ENCODE measurements at regions of chr15 and their contacts with region 1.

Region 1: DNA sequence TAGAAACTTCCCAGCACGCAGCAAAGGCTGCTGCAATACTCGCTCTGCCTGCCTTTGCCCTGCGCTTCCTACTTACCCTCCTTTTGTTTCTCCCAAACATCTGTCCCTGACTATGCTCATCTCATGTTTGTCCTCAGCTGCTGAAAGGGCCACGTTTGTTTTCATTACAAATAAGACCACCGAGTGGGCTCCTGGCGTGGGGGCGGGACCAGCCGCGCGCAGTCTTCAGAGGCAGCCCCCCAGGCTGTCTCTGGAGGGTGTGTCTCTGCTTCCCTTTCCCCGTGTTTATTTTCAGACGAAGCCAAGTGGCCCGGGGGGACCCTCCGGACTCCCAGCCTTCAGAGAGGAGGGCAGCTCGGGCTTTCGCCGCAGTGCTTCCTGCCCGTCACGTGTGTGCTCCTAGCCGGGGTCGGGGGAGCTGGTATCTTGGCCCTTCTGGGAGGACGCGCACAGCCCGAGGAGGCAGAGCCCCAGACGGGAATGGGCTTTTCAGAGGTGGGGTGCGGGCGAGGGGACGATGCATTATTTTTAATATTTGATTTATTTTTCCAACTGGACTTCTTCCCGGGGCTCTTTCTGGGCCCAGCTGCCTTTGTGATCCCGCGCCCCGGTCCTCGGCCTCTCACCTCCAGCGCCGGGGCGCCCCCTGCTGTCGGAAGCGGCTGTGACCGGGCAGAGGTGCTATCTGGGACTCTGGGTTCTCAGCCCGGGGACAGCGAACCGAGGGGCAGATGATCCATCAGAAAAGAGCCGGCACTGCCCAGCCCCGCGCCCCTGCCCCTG is 70.0 kb upstream of the CGNL1 start:
- DNase-seq: peak; percentile 87
- ATAC-seq: peak; percentile 73
- H3K4me3 ChIP-seq: peak overlapping the region; percentile 48 to 97 (median 66)
- H3K4me3 Mint-ChIP-seq: peak overlapping the region; percentile 85
- H3K27ac ChIP-seq: peak overlapping the region; percentile 57 to 87
- H3K27ac Mint-ChIP-seq: peak overlapping the region; percentile 87
- H3K4me1 ChIP-seq: peaks cover 36 to 44% of the 10 kb centered on the region in 2 donors
- H3K4me1 Mint-ChIP-seq: peaks cover 57% of the 10 kb centered on the region
- H3K27me3 ChIP-seq: no peaks in the 10 kb centered on the region
- H3K27me3 Mint-ChIP-seq: no peaks in the 10 kb centered on the region
- CTCF ChIP-seq: peak; percentile 95

Region 2: GRCh38 chr15:56365075-56365711 is 941.2 kb before region 1 on chr15 and contains the start of gene TEX9:
- CTCF ChIA-PET with region 1: no interaction called
- POLR2A ChIA-PET with region 1: no interaction called
- intact Hi-C with region 1: loop called (anchors 5 kb)
- DNase-seq: peak; percentile 86
- ATAC-seq: peak; percentile 88
- H3K4me3 ChIP-seq: peak within 1 kb of the TSS; percentile 60 to 71 (median 68)
- H3K4me3 Mint-ChIP-seq: peak within 1 kb of the TSS; percentile 95
- H3K27ac ChIP-seq: peak within 1 kb of the TSS; percentile 1 to 71
- H3K27ac Mint-ChIP-seq: peak within 1 kb of the TSS; percentile 90
- H3K4me1 ChIP-seq: peaks cover 15% of the 10 kb centered on the region in 2 donors
- H3K4me1 Mint-ChIP-seq: peaks cover 36% of the 10 kb centered on the region
- H3K27me3 ChIP-seq: peaks cover 0 to 8% (median 5%) of the 10 kb centered on the region in 4 experiments
- H3K27me3 Mint-ChIP-seq: no peaks in the 10 kb centered on the region
- CTCF ChIP-seq: no peak
- total RNA-seq, gene TEX9: 41.8 and 43.1 TPM in 2 replicates

Region 3: GRCh38 chr15:56683908-56684307 is 622.4 kb before region 1 on chr15:
- CTCF ChIA-PET with region 1: no interaction called
- POLR2A ChIA-PET with region 1: interaction called, 10 read pairs
- intact Hi-C with region 1: no loop called
- DNase-seq: no peak
- ATAC-seq: no peak
- H3K4me3 ChIP-seq: no peak overlapping the region
- H3K4me3 Mint-ChIP-seq: no peak overlapping the region
- H3K27ac ChIP-seq: no peak overlapping the region
- H3K27ac Mint-ChIP-seq: no peak overlapping the region
- H3K4me1 ChIP-seq: no peaks in the 10 kb centered on the region
- H3K4me1 Mint-ChIP-seq: peaks cover 2% of the 10 kb centered on the region
- H3K27me3 ChIP-seq: no peaks in the 10 kb centered on the region
- H3K27me3 Mint-ChIP-seq: no peaks in the 10 kb centered on the region
- CTCF ChIP-seq: no peak

Region 4: GRCh38 chr15:57017024-57017423 is 289.3 kb before region 1 on chr15:
- CTCF ChIA-PET with region 1: interaction called, 3 read pairs
- POLR2A ChIA-PET with region 1: no interaction called
- intact Hi-C with region 1: loop called (anchors 2 kb)
- DNase-seq: peak; percentile 13
- ATAC-seq: peak; percentile 33
- H3K4me3 ChIP-seq: no peak overlapping the region
- H3K4me3 Mint-ChIP-seq: no peak overlapping the region
- H3K27ac ChIP-seq: no peak overlapping the region
- H3K27ac Mint-ChIP-seq: no peak overlapping the region
- H3K4me1 ChIP-seq: no peaks in the 10 kb centered on the region
- H3K4me1 Mint-ChIP-seq: peaks cover 16% of the 10 kb centered on the region
- H3K27me3 ChIP-seq: no peaks in the 10 kb centered on the region
- H3K27me3 Mint-ChIP-seq: no peaks in the 10 kb centered on the region
- CTCF ChIP-seq: no peak

Region 5: DNA sequence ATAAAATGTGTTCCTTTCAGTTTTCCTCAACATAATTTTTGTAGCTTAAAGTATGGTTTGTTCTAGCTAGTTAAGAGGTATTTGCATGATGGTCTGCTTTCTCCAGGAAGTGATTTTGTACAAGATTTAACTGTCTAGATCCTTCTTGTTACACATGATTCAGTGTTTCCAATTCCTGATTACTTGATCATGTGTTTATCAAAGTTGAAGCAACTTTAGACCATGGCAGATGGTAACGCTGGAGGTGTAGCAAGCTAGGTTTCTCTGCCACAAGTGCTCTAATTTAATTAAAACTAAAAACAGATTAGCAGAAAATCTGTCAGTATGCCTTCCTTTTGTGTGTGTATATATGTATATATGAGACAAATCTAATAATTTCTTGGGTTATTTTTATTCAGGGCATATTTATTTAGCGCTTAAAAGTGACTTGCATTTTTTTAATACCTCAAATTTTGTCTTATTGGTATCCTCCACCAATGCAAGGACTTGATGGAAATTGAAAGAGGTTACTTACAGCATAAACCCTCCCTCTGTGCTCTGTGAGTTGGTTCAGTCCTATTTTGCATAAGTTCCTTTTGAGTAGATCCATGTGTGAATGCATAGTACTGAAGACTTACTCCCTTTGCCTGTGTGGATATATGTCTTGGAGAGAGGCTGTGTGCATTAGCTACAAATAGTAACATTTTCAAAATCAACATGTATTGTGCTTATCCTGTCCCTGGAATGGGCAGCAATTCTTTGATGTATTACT is 87.4 kb before region 1 on chr15:
- CTCF ChIA-PET with region 1: interaction called, 26 read pairs
- POLR2A ChIA-PET with region 1: no interaction called
- intact Hi-C with region 1: loop called (anchors 2 kb)
- DNase-seq: peak; percentile 48
- ATAC-seq: no peak
- H3K4me3 ChIP-seq: peak overlapping the region in 1 of 5 experiments; percentile 20
- H3K4me3 Mint-ChIP-seq: peak overlapping the region; percentile 77
- H3K27ac ChIP-seq: no peak overlapping the region
- H3K27ac Mint-ChIP-seq: no peak overlapping the region
- H3K4me1 ChIP-seq: peaks cover 12 to 18% of the 10 kb centered on the region in 2 donors
- H3K4me1 Mint-ChIP-seq: peaks cover 40% of the 10 kb centered on the region
- H3K27me3 ChIP-seq: no peaks in the 10 kb centered on the region
- H3K27me3 Mint-ChIP-seq: no peaks in the 10 kb centered on the region
- CTCF ChIP-seq: no peak

Region 6: DNA sequence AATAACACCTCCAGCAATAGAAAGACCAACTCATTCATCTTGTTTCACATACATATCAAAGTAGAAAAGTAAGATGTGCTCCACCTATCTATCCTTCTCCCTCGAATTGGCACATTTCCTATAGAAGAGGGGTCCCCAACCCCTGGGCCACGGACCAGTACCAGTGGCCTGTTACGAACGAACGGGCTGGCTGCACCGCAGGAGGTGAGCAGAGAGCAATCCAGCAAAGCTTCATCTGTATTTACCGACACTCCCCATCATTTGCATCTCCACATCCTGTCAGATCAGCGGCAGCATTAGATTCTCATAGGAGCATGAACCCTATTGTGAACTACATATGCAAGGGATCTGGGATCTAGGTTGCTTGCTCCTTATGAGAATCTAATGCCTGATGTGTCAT is 25.0 kb before region 1 on chr15:
- CTCF ChIA-PET with region 1: interaction called, 45 read pairs
- POLR2A ChIA-PET with region 1: interaction called, 109 read pairs
- intact Hi-C with region 1: no loop called
- DNase-seq: peak; percentile 73
- ATAC-seq: peak; percentile 63
- H3K4me3 ChIP-seq: peak overlapping the region; percentile 18 to 64 (median 55)
- H3K4me3 Mint-ChIP-seq: peak overlapping the region; percentile 91
- H3K27ac ChIP-seq: peak overlapping the region; percentile 95
- H3K27ac Mint-ChIP-seq: peak overlapping the region; percentile 94
- H3K4me1 ChIP-seq: peaks cover 71 to 72% of the 10 kb centered on the region in 2 donors
- H3K4me1 Mint-ChIP-seq: peaks cover 75% of the 10 kb centered on the region
- H3K27me3 ChIP-seq: no peaks in the 10 kb centered on the region
- H3K27me3 Mint-ChIP-seq: no peaks in the 10 kb centered on the region
- CTCF ChIP-seq: no peak

Region 7: DNA sequence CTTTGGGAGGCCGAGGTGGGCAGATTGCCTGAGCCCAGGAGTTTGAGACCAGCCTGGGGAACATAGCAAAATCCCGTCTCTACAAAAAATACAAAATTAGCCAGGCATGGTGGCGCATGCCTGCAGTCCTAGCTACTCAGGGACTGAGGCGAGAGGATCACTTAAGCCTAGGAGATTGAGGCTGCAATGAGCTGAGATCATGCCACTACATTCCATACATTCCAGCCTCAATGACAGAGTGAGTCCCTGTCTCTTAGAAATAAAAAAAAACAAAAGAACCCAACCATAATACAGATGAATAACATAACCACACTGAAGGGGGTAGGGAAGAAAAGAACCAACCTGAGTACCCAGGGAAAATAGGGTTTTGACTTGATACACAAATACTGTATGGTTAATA is 50.3 kb after region 1 on chr15:
- CTCF ChIA-PET with region 1: no interaction called
- POLR2A ChIA-PET with region 1: no interaction called
- intact Hi-C with region 1: no loop called
- DNase-seq: no peak
- ATAC-seq: no peak
- H3K4me3 ChIP-seq: no peak overlapping the region
- H3K4me3 Mint-ChIP-seq: no peak overlapping the region
- H3K27ac ChIP-seq: no peak overlapping the region
- H3K27ac Mint-ChIP-seq: no peak overlapping the region
- H3K4me1 ChIP-seq: no peaks in the 10 kb centered on the region
- H3K4me1 Mint-ChIP-seq: no peaks in the 10 kb centered on the region
- H3K27me3 ChIP-seq: no peaks in the 10 kb centered on the region
- H3K27me3 Mint-ChIP-seq: peaks cover 9% of the 10 kb centered on the region
- CTCF ChIP-seq: no peak